ENCODE measurements at regions of chr3 and their contacts with region 1.

Region 1: GRCh38 chr3:128969993-128970739 is 23.7 kb downstream of the CFAP92 start:
- DNase-seq: peak; percentile 73
- ATAC-seq: peak; percentile 80
- H3K4me3 Mint-ChIP-seq: no peak overlapping the region
- H3K27ac Mint-ChIP-seq: no peak overlapping the region
- H3K4me1 Mint-ChIP-seq: peaks cover 6% of the 10 kb centered on the region
- H3K27me3 Mint-ChIP-seq: no peaks in the 10 kb centered on the region
- CTCF ChIP-seq: peak; percentile 96

Region 2: GRCh38 chr3:128814519-128815317 is 155.4 kb before region 1 on chr3:
- CTCF ChIA-PET with region 1: no interaction called
- POLR2A ChIA-PET with region 1: no interaction called
- intact Hi-C with region 1: no loop called
- DNase-seq: no peak
- ATAC-seq: no peak
- H3K4me3 Mint-ChIP-seq: no peak overlapping the region
- H3K27ac Mint-ChIP-seq: peak overlapping the region; percentile 17
- H3K4me1 Mint-ChIP-seq: peaks cover 12% of the 10 kb centered on the region
- H3K27me3 Mint-ChIP-seq: no peaks in the 10 kb centered on the region
- CTCF ChIP-seq: no peak

Region 3: DNA sequence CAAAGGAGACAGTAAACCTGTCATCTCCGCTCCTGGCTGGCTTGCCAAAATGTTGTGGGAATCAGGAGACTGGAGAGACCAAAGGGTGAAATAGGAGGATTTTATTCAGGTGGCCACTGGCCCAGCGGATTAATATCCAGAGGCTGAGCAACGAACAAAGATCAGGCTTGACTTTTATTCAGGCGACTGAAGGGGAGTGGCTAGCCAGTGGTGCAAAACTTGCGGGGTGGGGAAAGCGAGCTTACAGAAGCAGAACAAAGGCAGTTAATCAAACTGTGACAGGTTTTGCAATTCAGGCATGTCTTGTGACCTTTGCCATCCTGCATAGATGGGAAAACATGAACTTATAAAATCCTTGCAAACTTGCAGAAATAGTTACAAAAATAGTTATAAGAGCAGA is 110.5 kb before region 1 on chr3:
- CTCF ChIA-PET with region 1: no interaction called
- POLR2A ChIA-PET with region 1: no interaction called
- intact Hi-C with region 1: no loop called
- DNase-seq: no peak
- ATAC-seq: no peak
- H3K4me3 Mint-ChIP-seq: no peak overlapping the region
- H3K27ac Mint-ChIP-seq: no peak overlapping the region
- H3K4me1 Mint-ChIP-seq: peaks cover under 1% of the 10 kb centered on the region
- H3K27me3 Mint-ChIP-seq: no peaks in the 10 kb centered on the region
- CTCF ChIP-seq: no peak

Region 4: DNA sequence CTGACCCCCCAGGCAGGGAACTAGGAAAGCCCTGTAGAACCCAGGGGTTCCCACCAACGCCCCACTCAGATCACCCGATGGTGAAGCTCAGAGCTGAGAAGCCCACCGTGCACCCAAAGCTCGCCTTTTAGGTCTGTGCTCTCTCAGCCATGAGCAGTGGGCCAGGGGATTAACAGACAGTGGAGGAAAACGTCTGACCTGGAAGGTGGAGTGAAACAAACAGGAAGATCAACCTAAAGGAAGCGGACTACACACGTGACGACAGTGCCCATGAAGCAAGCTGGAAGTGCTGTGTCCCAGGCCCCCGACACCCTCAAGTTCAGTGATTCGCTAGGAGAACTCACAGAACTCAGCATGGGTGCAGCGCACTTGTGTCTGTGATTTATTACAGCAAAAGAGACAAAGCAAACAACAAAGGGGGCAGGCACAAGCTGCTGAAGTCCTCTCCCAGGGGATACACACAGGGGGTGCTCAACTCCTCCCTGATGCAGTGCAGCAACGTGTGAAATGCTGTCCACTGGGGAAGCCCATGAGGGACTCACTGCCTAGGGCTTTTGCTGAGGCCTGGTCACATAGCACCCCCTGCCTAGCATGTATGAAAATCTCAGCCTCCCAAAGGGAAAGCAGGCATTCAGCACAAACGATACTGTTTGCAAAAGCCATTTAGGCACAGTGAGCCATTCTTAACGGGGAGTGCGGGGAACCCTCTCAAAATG is 19.8 kb before region 1 on chr3:
- CTCF ChIA-PET with region 1: interaction called, 11 read pairs
- POLR2A ChIA-PET with region 1: no interaction called
- intact Hi-C with region 1: no loop called
- DNase-seq: peak; percentile 48
- ATAC-seq: peak; percentile 62
- H3K4me3 Mint-ChIP-seq: no peak overlapping the region
- H3K27ac Mint-ChIP-seq: no peak overlapping the region
- H3K4me1 Mint-ChIP-seq: no peaks in the 10 kb centered on the region
- H3K27me3 Mint-ChIP-seq: no peaks in the 10 kb centered on the region
- CTCF ChIP-seq: no peak

Region 5: GRCh38 chr3:129016356-129016719 is 46.2 kb after region 1 on chr3:
- CTCF ChIA-PET with region 1: interaction called, 75 read pairs
- POLR2A ChIA-PET with region 1: interaction called, 5 read pairs
- intact Hi-C with region 1: no loop called
- DNase-seq: peak; percentile 82
- ATAC-seq: peak; percentile 85
- H3K4me3 Mint-ChIP-seq: peak overlapping the region; percentile 71
- H3K27ac Mint-ChIP-seq: peak overlapping the region; percentile 97
- H3K4me1 Mint-ChIP-seq: peaks cover 31% of the 10 kb centered on the region
- H3K27me3 Mint-ChIP-seq: no peaks in the 10 kb centered on the region
- CTCF ChIP-seq: peak; percentile 34

Region 6: DNA sequence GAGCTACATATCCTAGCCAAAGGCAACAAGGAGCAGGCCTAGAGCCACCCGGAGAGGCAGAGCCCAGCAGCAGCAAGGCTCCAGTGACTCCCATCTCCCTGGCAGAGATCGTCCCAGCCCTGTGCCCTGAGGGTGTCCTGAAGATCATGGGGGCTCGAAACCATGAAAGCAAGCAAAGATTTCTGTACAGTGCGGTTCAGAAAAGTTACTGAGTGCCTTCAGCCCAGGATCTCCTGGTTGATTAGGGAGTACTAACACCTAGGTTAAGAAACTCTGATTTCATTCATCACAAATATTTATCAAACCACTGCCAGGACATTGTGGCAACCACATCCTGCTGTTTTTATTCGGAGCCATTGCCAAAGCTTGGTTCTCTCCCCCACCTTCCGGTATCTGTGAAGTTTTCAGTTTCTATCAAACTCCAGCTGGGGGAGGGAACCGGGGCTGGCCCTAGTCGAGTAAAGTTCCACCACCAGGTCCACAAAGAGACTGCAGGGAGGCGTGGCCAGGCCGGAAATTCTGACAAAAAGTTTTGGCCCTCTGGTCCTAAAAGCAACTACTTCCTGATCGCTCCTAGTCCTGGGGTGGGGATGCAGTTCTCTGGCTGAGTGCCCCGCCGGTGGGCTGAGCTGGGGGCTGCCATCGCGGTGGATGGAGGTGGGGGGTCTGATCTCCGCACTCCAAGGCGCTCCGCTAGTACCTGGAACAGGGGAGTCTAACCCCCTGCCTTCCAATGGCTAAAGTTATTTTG is 150.3 kb after region 1 on chr3:
- CTCF ChIA-PET with region 1: interaction called, 27 read pairs
- POLR2A ChIA-PET with region 1: interaction called, 5 read pairs
- intact Hi-C with region 1: no loop called
- DNase-seq: peak; percentile 98
- ATAC-seq: peak; percentile 63
- H3K4me3 Mint-ChIP-seq: peak overlapping the region; percentile 88
- H3K27ac Mint-ChIP-seq: peak overlapping the region; percentile 90
- H3K4me1 Mint-ChIP-seq: peaks cover 45% of the 10 kb centered on the region
- H3K27me3 Mint-ChIP-seq: no peaks in the 10 kb centered on the region
- CTCF ChIP-seq: no peak

Region 7: GRCh38 chr3:129183569-129184395 is 213.6 kb after region 1 on chr3 and contains the start of gene CNBP:
- CTCF ChIA-PET with region 1: interaction called, 11 read pairs
- POLR2A ChIA-PET with region 1: interaction called, 3 read pairs
- intact Hi-C with region 1: no loop called
- DNase-seq: peak; percentile 94
- ATAC-seq: peak; percentile 94
- H3K4me3 Mint-ChIP-seq: peak within 1 kb of the TSS; percentile 97
- H3K27ac Mint-ChIP-seq: peak within 1 kb of the TSS; percentile 99
- H3K4me1 Mint-ChIP-seq: peaks cover 29% of the 10 kb centered on the region
- H3K27me3 Mint-ChIP-seq: no peaks in the 10 kb centered on the region
- CTCF ChIP-seq: no peak
- total RNA-seq, gene CNBP: 453 to 454 TPM

Region 8: DNA sequence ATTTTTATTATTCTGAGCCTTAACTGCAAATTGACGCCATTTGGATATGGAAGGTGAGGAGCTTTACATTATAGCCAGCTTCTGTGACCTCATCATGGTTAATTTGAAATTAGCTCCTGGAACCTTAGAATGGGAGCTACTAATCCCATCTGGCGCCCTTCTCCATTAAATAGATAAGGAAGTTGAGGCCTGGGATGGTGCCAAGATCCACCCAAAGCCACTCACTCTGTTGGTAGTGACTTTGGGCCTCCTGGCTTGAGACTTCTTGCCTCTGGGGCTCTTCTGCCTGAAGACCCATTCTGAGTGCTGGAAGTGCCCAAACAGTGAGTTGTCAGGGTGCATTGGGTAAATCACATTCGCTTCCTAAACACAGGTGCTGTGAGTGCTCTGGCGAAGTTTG is 296.5 kb after region 1 on chr3:
- CTCF ChIA-PET with region 1: interaction called, 14 read pairs
- POLR2A ChIA-PET with region 1: interaction called, 4 read pairs
- intact Hi-C with region 1: no loop called
- DNase-seq: no peak
- ATAC-seq: no peak
- H3K4me3 Mint-ChIP-seq: no peak overlapping the region
- H3K27ac Mint-ChIP-seq: no peak overlapping the region
- H3K4me1 Mint-ChIP-seq: no peaks in the 10 kb centered on the region
- H3K27me3 Mint-ChIP-seq: no peaks in the 10 kb centered on the region
- CTCF ChIP-seq: no peak